CD8-positive, alpha-beta memory T cell (primary cell): ENCODE measurements at regions of chr10 and their contacts with region 1.

Region 1: GRCh38 chr10:103451831-103452505 is at the start of gene CALHM2:
- DNase-seq: peak; percentile 31 to 66 (median 38)
- H3K4me3 ChIP-seq: peak within 1 kb of the TSS; percentile 78
- H3K4me3 Mint-ChIP-seq: peak within 1 kb of the TSS; percentile 81 to 98 (median 96)
- H3K27ac ChIP-seq: peak within 1 kb of the TSS; percentile 61
- H3K27ac Mint-ChIP-seq: peak within 1 kb of the TSS; percentile 87 to 99 (median 95)
- H3K4me1 ChIP-seq: peaks cover 30% of the 10 kb centered on the region
- H3K4me1 Mint-ChIP-seq: peaks cover 51 to 67% (median 51%) of the 10 kb centered on the region in 3 donors
- H3K27me3 ChIP-seq: no peaks in the 10 kb centered on the region
- H3K27me3 Mint-ChIP-seq: no peaks in the 10 kb centered on the region
- total RNA-seq, gene CALHM2: 20.4 to 22.2 TPM

Region 2: DNA sequence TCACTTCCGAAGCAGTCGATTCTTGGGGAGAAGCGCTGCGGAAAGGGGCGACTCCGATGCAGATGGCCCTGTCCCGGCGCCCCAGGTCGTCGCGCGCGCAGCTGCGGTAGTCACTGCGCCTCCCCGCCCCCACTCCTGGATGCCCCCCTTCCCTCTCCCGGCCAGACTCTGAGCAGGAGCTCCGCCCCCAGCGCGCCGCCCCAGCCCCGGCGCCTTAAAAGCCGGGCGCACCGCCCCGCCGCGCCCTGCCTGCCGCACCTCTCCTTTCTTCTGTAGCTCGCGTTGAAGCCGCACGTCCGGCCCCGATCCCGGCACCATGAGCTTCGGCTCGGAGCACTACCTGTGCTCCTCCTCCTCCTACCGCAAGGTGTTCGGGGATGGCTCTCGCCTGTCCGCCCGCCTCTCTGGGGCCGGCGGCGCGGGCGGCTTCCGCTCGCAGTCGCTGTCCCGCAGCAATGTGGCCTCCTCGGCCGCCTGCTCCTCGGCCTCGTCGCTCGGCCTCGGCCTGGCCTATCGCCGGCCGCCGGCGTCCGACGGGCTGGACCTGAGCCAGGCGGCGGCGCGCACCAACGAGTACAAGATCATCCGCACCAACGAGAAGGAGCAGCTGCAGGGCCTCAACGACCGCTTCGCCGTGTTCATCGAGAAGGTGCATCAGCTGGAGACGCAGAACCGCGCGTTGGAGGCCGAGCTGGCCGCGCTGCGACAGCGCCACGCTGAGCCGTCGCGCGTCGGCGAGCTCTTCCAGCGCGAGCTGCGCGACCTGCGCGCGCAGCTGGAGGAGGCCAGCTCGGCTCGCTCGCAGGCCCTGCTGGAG is 174.9 kb before region 1 on chr10 and contains the start of gene INA:
- CTCF ChIA-PET with region 1: no interaction called
- POLR2A ChIA-PET with region 1: no interaction called
- DNase-seq: no peak
- H3K4me3 ChIP-seq: no peak within 1 kb of the TSS
- H3K4me3 Mint-ChIP-seq: peak within 1 kb of the TSS in 5 of 7 donors; percentile 4 to 54 (median 36)
- H3K27ac ChIP-seq: no peak within 1 kb of the TSS
- H3K27ac Mint-ChIP-seq: no peak within 1 kb of the TSS
- H3K4me1 ChIP-seq: no peaks in the 10 kb centered on the region
- H3K4me1 Mint-ChIP-seq: peaks cover 8 to 24% (median 11%) of the 10 kb centered on the region in 3 donors
- H3K27me3 ChIP-seq: peaks cover 19% of the 10 kb centered on the region
- H3K27me3 Mint-ChIP-seq: peaks cover 48 to 78% of the 10 kb centered on the region in 2 donors
- total RNA-seq, gene INA: 0.73 to 0.94 TPM

Region 3: DNA sequence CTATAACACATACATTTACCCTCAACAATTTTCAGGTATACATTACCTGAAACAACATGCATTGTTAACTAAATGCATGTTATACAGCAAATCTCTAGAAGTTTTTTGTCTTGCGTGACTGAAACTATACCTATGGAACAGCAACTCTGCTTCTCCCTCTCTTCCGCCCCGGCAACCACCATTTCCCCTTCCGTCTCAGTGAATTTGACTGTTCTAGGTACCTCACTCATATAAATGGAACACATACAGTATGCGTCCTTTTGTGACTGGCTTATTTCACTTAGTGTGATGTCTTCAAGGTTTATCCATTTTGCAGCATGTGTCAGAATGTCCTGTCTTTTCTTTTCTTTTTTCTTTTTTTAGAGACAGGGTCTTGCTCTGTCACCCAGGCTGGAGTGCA is 22.3 kb before region 1 on chr10:
- CTCF ChIA-PET with region 1: no interaction called
- POLR2A ChIA-PET with region 1: no interaction called
- DNase-seq: no peak
- H3K4me3 ChIP-seq: no peak overlapping the region
- H3K4me3 Mint-ChIP-seq: peak overlapping the region in 5 of 7 donors; percentile 0 to 52 (median 20)
- H3K27ac ChIP-seq: no peak overlapping the region
- H3K27ac Mint-ChIP-seq: peak overlapping the region in 5 of 8 donors; percentile 6 to 78 (median 49)
- H3K4me1 ChIP-seq: peaks cover 28% of the 10 kb centered on the region
- H3K4me1 Mint-ChIP-seq: peaks cover 19 to 29% (median 28%) of the 10 kb centered on the region in 3 donors
- H3K27me3 ChIP-seq: no peaks in the 10 kb centered on the region
- H3K27me3 Mint-ChIP-seq: no peaks in the 10 kb centered on the region

Region 4: DNA sequence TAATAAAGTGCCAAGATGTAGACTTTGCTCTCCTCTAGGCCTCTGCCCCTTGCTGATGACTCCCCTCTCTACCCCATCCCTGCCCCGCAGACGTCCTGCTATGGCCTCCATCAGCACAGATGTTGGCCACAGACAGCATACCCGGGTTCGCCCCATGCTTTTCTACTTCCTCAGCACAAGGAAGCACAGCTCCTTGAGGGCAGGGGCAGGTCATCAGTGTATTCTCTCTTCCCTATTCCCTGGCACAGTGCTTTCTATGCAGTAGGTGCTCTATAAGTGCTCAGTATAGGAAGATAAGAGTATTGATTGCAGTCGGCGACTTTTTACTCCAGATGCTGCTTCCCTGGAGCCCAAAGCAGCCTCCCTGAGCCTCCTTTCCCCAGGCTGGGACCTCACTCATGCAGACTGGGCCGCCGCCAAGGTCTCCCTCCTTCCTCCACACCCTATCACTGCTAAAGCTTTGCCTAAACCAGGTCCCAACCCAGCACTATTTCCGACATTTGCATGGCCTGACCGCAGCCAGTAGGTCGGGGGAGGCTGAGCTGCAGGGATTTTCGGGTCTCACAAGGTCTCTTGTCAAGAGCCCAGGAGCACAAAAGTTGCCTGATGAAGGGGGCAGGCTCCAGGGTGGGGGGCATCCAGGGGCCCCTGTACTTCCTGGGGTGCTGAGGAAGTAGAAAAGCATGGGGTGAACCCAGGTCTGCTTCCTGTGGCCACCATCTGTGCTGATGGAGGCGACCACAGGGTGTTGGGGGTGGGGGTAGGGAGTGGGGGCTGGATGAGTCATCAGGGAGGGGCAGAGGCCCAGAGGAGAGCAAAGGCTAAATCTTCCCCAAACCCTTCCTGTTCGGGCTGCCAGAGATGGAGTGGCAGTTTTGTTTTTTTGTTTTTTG is 19.0 kb after region 1 on chr10:
- CTCF ChIA-PET with region 1: interaction called, 30 read pairs
- POLR2A ChIA-PET with region 1: interaction called, 25 read pairs
- DNase-seq: peak; percentile 50 to 91 (median 65)
- H3K4me3 ChIP-seq: peak overlapping the region; percentile 37
- H3K4me3 Mint-ChIP-seq: peak overlapping the region; percentile 7 to 88 (median 80)
- H3K27ac ChIP-seq: peak overlapping the region; percentile 36
- H3K27ac Mint-ChIP-seq: peak overlapping the region; percentile 78 to 98 (median 94)
- H3K4me1 ChIP-seq: peaks cover 31% of the 10 kb centered on the region
- H3K4me1 Mint-ChIP-seq: peaks cover 45 to 73% (median 55%) of the 10 kb centered on the region in 3 donors
- H3K27me3 ChIP-seq: no peaks in the 10 kb centered on the region
- H3K27me3 Mint-ChIP-seq: no peaks in the 10 kb centered on the region

Region 5: DNA sequence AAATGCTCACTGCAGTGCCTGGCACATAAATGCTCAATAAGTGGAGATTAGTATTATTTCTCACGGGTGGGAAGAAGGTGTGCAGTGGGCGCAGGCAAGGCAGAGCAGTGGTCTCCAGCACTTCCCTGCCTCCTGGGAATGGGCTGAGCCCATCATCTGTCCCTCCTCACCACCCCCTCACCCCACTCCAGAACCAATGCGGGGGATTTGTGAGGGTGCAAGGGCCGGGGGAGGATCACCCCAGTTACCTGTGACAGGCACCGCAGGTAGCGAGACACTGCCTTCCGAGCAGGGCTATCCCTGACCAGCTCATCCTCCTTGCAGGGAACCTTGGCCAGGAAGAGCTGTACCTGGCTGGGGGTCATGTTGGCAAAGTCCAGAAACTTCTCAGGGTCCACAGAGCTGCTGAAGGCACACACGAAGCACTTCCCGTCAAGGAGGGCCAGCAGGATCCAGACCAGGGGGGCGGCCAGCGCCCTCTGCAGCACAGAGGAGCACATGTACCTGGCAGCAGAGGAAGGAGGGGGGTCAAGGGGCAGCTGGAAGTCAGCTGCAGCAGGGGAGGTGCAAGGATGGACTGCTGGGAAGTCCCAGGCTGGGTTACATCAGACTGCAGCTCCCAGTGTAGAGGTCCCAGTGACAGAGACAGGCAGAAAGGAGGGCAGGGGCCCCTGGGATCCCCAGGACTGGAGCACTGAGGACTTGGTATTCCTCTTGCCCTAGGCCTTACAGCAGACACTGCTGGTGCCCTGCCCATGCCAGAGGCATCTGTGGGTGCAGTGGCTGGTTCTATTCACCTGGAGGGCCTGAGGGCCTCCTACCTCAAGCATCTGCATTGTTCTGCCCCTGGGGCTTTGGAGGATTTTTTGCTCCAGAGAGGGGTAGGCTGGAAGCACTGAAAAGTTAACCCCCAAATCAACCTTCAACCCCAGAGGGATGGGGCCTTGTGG is 24.4 kb after region 1 on chr10:
- CTCF ChIA-PET with region 1: interaction called, 30 read pairs
- POLR2A ChIA-PET with region 1: interaction called, 25 read pairs
- DNase-seq: no peak
- H3K4me3 ChIP-seq: no peak overlapping the region
- H3K4me3 Mint-ChIP-seq: no peak overlapping the region
- H3K27ac ChIP-seq: no peak overlapping the region
- H3K27ac Mint-ChIP-seq: peak overlapping the region in 1 of 8 donors; percentile 51
- H3K4me1 ChIP-seq: peaks cover 15% of the 10 kb centered on the region
- H3K4me1 Mint-ChIP-seq: peaks cover 19 to 35% (median 28%) of the 10 kb centered on the region in 3 donors
- H3K27me3 ChIP-seq: no peaks in the 10 kb centered on the region
- H3K27me3 Mint-ChIP-seq: no peaks in the 10 kb centered on the region